Activated CD4-positive, alpha-beta memory T cell treated with anti-CD3 and anti-CD28 coated beads, Interleukin-2, amount 10 ng/mL, durations not matched to agents 7 days and 5 days (primary cell): ENCODE measurements at regions of chr6 and their contacts with region 1.

Region 1: DNA sequence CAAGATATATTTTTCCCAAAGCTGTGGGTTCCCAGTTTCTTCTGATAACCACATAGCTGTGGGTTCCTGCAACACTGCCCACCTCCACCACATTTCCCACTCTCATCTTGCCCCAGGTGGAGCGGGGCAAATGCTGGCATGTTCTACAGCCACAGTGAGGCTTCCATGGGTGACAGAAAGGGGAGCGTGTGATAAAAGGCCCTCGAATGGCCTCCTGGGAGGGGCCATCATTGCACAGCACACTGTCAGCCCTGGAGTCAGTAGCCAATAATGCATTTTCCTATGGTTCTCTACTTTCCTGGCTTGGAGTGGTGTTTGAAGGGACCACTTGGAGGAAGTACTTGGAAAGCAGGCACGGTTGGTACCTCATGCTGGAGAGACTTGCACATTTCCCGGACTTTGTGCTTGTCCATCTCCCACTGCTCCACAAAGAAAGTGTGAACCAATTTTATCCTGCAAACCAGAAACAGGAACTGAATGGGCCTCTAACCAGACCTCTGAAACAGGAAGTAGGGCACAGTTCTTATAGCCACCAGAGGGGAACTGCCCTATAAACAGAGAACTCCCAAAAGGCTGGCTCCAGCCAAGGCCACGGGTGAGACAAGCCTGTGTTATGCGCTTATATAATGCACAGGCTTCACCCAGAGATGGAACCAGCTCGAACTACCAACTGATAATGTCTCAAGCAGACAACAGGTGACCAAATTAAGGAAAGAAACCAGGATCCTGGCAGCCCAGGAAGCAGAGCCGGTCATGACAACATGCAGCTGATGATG is 8.6 kb downstream of the MAP3K5 start:
- DNase-seq: no peak
- H3K4me3 Mint-ChIP-seq: peak overlapping the region; percentile 62
- H3K27ac Mint-ChIP-seq: peak overlapping the region; percentile 76
- H3K4me1 Mint-ChIP-seq: peaks cover 72% of the 10 kb centered on the region
- H3K27me3 Mint-ChIP-seq: no peaks in the 10 kb centered on the region

Region 2: GRCh38 chr6:136618086-136618485 is 165.6 kb before region 1 on chr6:
- CTCF ChIA-PET with region 1: no interaction called
- POLR2A ChIA-PET with region 1: no interaction called
- DNase-seq: no peak
- H3K4me3 Mint-ChIP-seq: no peak overlapping the region
- H3K27ac Mint-ChIP-seq: no peak overlapping the region
- H3K4me1 Mint-ChIP-seq: no peaks in the 10 kb centered on the region
- H3K27me3 Mint-ChIP-seq: no peaks in the 10 kb centered on the region

Region 3: DNA sequence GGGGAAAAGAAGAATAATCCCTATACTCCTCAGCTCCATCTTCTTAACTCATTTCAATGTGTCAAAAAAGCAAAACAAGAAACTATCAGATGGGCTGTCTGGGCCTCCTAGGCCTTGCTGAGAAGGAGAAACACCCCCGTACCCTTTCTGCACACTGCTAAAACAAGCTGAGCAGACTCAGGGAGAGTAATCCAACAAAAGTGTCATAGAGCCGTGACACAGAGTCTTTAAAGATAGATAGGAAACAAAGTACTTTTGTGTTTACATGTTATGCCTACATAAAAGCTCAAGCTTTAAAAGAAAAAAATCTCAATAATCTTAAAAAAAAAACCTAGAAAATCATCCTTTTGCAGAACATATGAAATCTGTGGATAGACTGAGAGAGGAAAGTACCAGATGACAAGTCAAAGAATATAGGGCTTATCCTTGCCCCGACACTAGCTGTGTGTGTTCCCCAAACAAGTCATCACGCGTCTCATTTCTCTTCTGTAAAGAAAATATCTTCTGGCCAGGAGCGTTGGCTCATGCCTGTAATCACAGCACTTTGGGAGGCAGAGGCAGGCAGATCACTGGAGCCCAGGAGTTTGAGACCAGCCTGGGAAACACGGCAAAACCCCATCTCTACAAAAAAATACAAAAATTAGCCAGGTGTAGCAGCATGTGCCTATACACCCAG is 72.7 kb before region 1 on chr6:
- CTCF ChIA-PET with region 1: no interaction called
- POLR2A ChIA-PET with region 1: no interaction called
- DNase-seq: no peak
- H3K4me3 Mint-ChIP-seq: no peak overlapping the region
- H3K27ac Mint-ChIP-seq: no peak overlapping the region
- H3K4me1 Mint-ChIP-seq: no peaks in the 10 kb centered on the region
- H3K27me3 Mint-ChIP-seq: no peaks in the 10 kb centered on the region

Region 4: GRCh38 chr6:136761227-136761922 is 22.3 kb before region 1 on chr6:
- CTCF ChIA-PET with region 1: interaction called, 11 read pairs
- POLR2A ChIA-PET with region 1: interaction called, 59 read pairs
- DNase-seq: peak; percentile 34
- H3K4me3 Mint-ChIP-seq: peak overlapping the region; percentile 38
- H3K27ac Mint-ChIP-seq: peak overlapping the region; percentile 21
- H3K4me1 Mint-ChIP-seq: peaks cover 66% of the 10 kb centered on the region
- H3K27me3 Mint-ChIP-seq: no peaks in the 10 kb centered on the region

Region 5: DNA sequence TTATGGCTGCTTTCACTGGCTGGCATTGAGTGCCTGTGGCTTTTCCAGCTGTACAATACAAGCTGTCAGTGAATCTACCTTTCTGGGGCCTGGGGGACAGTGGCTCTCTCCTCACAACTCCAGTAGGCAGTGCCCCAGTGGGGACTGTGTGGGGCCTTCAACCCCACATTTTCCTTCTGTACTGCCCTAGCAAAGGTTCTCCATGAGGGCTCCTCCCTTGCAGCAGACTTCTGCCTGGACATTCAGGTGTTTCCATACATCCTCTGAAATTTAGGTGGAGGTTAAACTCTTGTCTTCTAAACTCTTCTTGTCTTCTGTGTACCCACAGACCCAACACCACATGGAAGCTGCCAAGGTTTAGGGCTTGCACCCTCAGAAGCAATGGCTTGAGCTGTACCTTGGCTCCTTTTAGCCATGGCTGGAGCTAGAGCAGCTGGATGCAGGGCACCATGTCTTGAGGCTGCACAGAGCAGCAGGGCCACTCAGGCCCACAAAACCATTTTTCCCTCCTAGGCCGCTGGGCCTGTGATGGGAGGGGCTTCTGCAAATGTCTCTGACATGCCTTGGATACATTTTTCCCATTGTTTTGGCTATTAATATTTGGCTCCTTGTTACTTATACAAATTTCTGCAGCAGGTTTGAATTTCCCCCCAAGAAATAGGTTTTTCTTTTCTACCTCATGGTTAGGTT is 48.3 kb after region 1 on chr6:
- CTCF ChIA-PET with region 1: no interaction called
- POLR2A ChIA-PET with region 1: no interaction called
- DNase-seq: no peak
- H3K4me3 Mint-ChIP-seq: no peak overlapping the region
- H3K27ac Mint-ChIP-seq: no peak overlapping the region
- H3K4me1 Mint-ChIP-seq: peaks cover under 1% of the 10 kb centered on the region
- H3K27me3 Mint-ChIP-seq: no peaks in the 10 kb centered on the region

Region 6: GRCh38 chr6:137121401-137121997 is 337.8 kb after region 1 on chr6:
- CTCF ChIA-PET with region 1: no interaction called
- POLR2A ChIA-PET with region 1: no interaction called
- DNase-seq: no peak
- H3K4me3 Mint-ChIP-seq: no peak overlapping the region
- H3K27ac Mint-ChIP-seq: no peak overlapping the region
- H3K4me1 Mint-ChIP-seq: peaks cover 11% of the 10 kb centered on the region
- H3K27me3 Mint-ChIP-seq: no peaks in the 10 kb centered on the region